ENCODE measurements at regions of chr19 and their contacts with region 1.

Region 1: DNA sequence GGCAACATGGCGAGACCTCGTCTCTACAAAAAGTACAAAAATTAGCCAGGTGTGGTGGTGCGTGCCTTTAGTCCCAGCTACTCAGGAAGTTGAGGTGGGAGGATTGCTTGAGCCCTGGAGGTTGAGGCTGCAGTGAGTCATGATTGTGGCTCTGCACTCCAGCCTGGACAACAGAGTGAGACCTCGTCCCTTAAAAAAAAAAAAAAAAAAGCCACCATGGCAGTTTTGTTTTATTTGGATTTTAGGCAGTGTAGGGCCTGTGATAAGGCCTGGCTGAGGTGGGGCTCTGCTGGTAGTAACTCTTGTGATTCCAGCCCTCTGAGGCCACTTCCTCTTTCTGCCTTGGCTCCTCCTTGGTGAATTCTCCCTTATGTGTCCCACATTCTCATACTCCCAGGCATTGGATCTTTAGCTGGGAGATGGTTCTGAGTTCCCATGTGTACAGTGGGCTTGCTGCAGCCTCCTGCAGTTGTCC is 39.2 kb downstream of the GATAD2A start:
- DNase-seq: peak; percentile 69
- ATAC-seq: peak; percentile 70
- H3K4me3 ChIP-seq: peak overlapping the region in 1 of 5 experiments; percentile 21
- H3K4me3 Mint-ChIP-seq: peak overlapping the region; percentile 81
- H3K27ac ChIP-seq: peak overlapping the region; percentile 69 to 73
- H3K27ac Mint-ChIP-seq: peak overlapping the region; percentile 92
- H3K4me1 ChIP-seq: peaks cover 35 to 47% of the 10 kb centered on the region in 2 donors
- H3K4me1 Mint-ChIP-seq: peaks cover 61% of the 10 kb centered on the region
- H3K27me3 ChIP-seq: no peaks in the 10 kb centered on the region
- H3K27me3 Mint-ChIP-seq: no peaks in the 10 kb centered on the region
- CTCF ChIP-seq: no peak

Region 2: DNA sequence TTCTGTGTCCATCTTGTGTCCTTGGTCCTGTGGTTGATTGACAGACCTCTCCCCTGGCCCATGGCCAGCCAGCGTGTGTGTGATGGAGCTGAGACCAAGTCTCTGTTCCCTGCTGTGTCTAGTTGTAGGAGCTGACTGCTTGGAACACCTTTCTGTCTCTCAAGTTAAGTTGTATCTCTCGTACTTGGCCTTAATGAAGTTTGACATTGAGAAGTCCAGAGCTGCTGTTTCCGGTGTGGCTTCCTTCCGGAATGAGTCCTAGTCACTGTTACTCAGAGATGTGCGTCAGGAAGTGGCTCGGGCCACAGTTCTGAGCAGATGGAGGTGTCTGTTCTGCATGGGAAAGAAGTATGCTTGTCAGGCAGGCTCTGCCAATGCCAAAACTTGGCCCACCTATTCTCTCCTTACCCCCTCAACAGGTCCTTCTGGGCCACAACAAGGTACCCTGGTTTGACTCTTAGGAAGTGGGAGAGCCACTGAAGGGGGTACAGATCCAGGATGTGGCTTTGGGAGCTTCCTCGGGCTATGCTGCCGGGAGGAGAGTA is 15.1 kb after region 1 on chr19:
- CTCF ChIA-PET with region 1: interaction called, 5 read pairs
- POLR2A ChIA-PET with region 1: interaction called, 8 read pairs
- intact Hi-C with region 1: loop called (anchors 2 kb)
- DNase-seq: peak; percentile 61
- ATAC-seq: peak; percentile 60
- H3K4me3 ChIP-seq: peak overlapping the region; percentile 11 to 47 (median 39)
- H3K4me3 Mint-ChIP-seq: peak overlapping the region; percentile 80
- H3K27ac ChIP-seq: peak overlapping the region; percentile 74 to 81
- H3K27ac Mint-ChIP-seq: peak overlapping the region; percentile 91
- H3K4me1 ChIP-seq: peaks cover 55 to 68% of the 10 kb centered on the region in 2 donors
- H3K4me1 Mint-ChIP-seq: peaks cover 71% of the 10 kb centered on the region
- H3K27me3 ChIP-seq: no peaks in the 10 kb centered on the region
- H3K27me3 Mint-ChIP-seq: no peaks in the 10 kb centered on the region
- CTCF ChIP-seq: no peak

Measured in B cell (primary cell).